SK-N-SH (cell line): ENCODE measurements at regions of chr20 and their contacts with region 1.

Region 1: GRCh38 chr20:41392871-41393704 is 26.5 kb upstream of the EMILIN3 start:
- DNase-seq: peak; percentile 54
- H3K4me3 ChIP-seq: no peak overlapping the region
- H3K27ac ChIP-seq: peak overlapping the region in 1 of 2 experiments; percentile 11; a peak in 2 of 4 replicates
- H3K4me1 ChIP-seq: peaks cover 0 to 32% of the 10 kb centered on the region in 2 experiments; a peak in 1 of 4 replicates
- H3K27me3 ChIP-seq: no peaks in the 10 kb centered on the region; the same call in 1 of the 2 replicates
- CTCF ChIP-seq: no peak
- EP300 ChIP-seq: no peak
- RAD21 ChIP-seq: no peak

Region 2: GRCh38 chr20:41276317-41276751 is 116.8 kb before region 1 on chr20:
- CTCF ChIA-PET with region 1: no interaction called
- POLR2A ChIA-PET with region 1: no interaction called
- DNase-seq: no peak
- H3K4me3 ChIP-seq: no peak overlapping the region
- H3K27ac ChIP-seq: no peak overlapping the region
- H3K4me1 ChIP-seq: no peaks in the 10 kb centered on the region; a peak in 1 of 4 replicates
- H3K27me3 ChIP-seq: no peaks in the 10 kb centered on the region
- CTCF ChIP-seq: no peak
- EP300 ChIP-seq: no peak
- RAD21 ChIP-seq: no peak

Region 3: GRCh38 chr20:41365777-41366598 is 27.1 kb before region 1 on chr20:
- CTCF ChIA-PET with region 1: no interaction called
- POLR2A ChIA-PET with region 1: no interaction called
- DNase-seq: peak; percentile 78
- H3K4me3 ChIP-seq: peak overlapping the region in 1 of 2 experiments; percentile 27; a peak in 1 of 4 replicates
- H3K27ac ChIP-seq: no peak overlapping the region
- H3K4me1 ChIP-seq: peaks cover 0 to 9% of the 10 kb centered on the region in 2 experiments; a peak in 1 of 4 replicates
- H3K27me3 ChIP-seq: peaks cover 43% of the 10 kb centered on the region
- CTCF ChIP-seq: no peak
- EP300 ChIP-seq: no peak
- RAD21 ChIP-seq: no peak

Region 4: GRCh38 chr20:41411391-41411847 is 18.3 kb after region 1 on chr20:
- CTCF ChIA-PET with region 1: interaction called, 10 read pairs
- POLR2A ChIA-PET with region 1: no interaction called
- DNase-seq: no peak
- H3K4me3 ChIP-seq: no peak overlapping the region
- H3K27ac ChIP-seq: no peak overlapping the region
- H3K4me1 ChIP-seq: peaks cover 0 to 18% of the 10 kb centered on the region in 2 experiments; a peak in 1 of 4 replicates
- H3K27me3 ChIP-seq: no peaks in the 10 kb centered on the region
- CTCF ChIP-seq: peak; percentile 59
- EP300 ChIP-seq: no peak
- RAD21 ChIP-seq: peak; percentile 62